Panc1 (cell line): ENCODE measurements at regions of chr19 and their contacts with region 1.

Region 1: DNA sequence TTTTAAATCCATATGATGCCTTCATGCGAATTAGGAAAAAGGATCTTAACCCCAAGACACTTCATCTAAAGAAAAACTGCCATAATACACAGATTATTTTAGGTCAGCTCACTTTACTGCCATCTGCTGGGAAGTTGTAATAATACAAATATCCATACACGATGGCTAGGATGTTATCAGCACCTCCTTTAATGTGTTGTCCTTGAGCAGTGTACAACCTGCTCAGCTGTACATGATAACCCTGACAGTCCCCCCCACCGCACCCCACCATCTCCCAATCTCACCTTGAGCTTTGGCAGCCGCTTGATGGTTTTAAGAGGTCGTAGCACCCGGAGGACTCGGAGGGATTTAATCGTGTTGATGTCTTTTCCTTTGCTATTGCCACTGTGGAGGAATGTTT is 112.2 kb downstream of the IER2 start:
- DNase-seq: peak; percentile 39
- ATAC-seq: peak; percentile 73
- H3K4me3 ChIP-seq: no peak overlapping the region
- H3K27ac ChIP-seq: no peak overlapping the region
- H3K4me1 ChIP-seq: no peaks in the 10 kb centered on the region
- H3K27me3 ChIP-seq: no peaks in the 10 kb centered on the region
- CTCF ChIP-seq: no peak; the same call in 1 of the 2 replicates

Region 2: GRCh38 chr19:12974301-12975220 is 287.9 kb before region 1 on chr19:
- CTCF ChIA-PET with region 1: no interaction called
- POLR2A ChIA-PET with region 1: no interaction called
- in situ Hi-C with region 1: no loop called
- intact Hi-C with region 1: loop called (anchors 5 kb)
- DNase-seq: no peak
- ATAC-seq: no peak
- H3K4me3 ChIP-seq: no peak overlapping the region
- H3K27ac ChIP-seq: no peak overlapping the region
- H3K4me1 ChIP-seq: peaks cover 5% of the 10 kb centered on the region
- H3K27me3 ChIP-seq: no peaks in the 10 kb centered on the region
- CTCF ChIP-seq: no peak

Region 3: GRCh38 chr19:13241231-13242104 is 21.0 kb before region 1 on chr19:
- CTCF ChIA-PET with region 1: no interaction called
- POLR2A ChIA-PET with region 1: interaction called, 11 read pairs
- in situ Hi-C with region 1: no loop called
- intact Hi-C with region 1: no loop called
- DNase-seq: no peak
- ATAC-seq: no peak
- H3K4me3 ChIP-seq: no peak overlapping the region
- H3K27ac ChIP-seq: no peak overlapping the region
- H3K4me1 ChIP-seq: no peaks in the 10 kb centered on the region
- H3K27me3 ChIP-seq: no peaks in the 10 kb centered on the region
- CTCF ChIP-seq: no peak; the same call in 1 of the 2 replicates